Transverse colon (tissue), 4 donors: ENCODE measurements at regions of chr17 and their contacts with region 1.

Region 1: GRCh38 chr17:42760652-42761581 is at the start of gene RAMP2:
- DNase-seq: no peak
- H3K4me3 ChIP-seq: peak within 1 kb of the TSS; percentile 32 to 62 (median 46)
- H3K27ac ChIP-seq: peak within 1 kb of the TSS; percentile 21 to 55 (median 44)
- H3K4me1 ChIP-seq: peaks cover 8 to 22% (median 14%) of the 10 kb centered on the region in 4 donors
- H3K27me3 ChIP-seq: peaks cover 30% of the 10 kb centered on the region
- CTCF ChIP-seq: no peak
- EP300 ChIP-seq: no peak
- POLR2A ChIP-seq: no peak
- total RNA-seq, gene RAMP2: 6.1 to 88.0 (median 23.4) TPM

Region 2: DNA sequence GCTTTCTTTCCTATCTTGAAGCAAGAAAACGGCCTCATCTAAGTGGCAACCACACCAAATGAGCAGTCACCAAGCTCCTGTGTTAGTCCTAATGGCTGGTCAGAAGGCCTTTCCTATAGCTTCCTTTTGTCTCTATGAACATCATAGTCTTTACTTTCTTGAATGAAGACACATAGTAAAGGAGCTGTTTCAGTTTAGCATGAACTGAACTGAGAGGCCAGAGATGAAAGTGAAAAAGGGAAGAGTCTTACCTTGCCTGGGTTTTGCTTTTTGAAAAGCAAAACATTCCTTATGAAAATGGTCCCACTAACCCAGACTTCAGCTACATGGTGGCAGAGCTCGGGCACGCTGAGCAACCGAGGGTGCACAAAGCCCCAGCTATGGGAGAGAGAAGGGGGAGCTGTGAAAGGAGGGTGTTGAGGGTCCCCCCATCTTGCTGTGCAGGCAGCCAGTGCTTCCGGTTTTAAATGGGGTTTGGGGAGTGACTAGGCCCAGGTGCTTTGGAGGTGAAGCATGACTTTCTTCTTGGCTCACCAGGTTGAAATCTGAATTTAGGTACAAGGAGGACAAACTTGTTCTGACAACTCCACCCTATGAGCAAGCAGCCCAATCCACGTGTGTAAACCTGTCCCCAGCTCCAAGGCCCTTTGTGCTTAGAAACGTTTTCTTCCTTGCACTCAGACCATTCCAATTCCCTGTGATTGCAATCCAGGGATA is 174.2 kb before region 1 on chr17:
- in situ Hi-C with region 1: no loop called
- intact Hi-C with region 1: loop called (anchors 10 kb)
- DNase-seq: no peak
- H3K4me3 ChIP-seq: no peak overlapping the region
- H3K27ac ChIP-seq: no peak overlapping the region
- H3K4me1 ChIP-seq: peaks cover 0 to 6% (median 0%) of the 10 kb centered on the region in 4 donors
- H3K27me3 ChIP-seq: no peaks in the 10 kb centered on the region
- CTCF ChIP-seq: no peak
- EP300 ChIP-seq: no peak
- POLR2A ChIP-seq: no peak

Region 3: DNA sequence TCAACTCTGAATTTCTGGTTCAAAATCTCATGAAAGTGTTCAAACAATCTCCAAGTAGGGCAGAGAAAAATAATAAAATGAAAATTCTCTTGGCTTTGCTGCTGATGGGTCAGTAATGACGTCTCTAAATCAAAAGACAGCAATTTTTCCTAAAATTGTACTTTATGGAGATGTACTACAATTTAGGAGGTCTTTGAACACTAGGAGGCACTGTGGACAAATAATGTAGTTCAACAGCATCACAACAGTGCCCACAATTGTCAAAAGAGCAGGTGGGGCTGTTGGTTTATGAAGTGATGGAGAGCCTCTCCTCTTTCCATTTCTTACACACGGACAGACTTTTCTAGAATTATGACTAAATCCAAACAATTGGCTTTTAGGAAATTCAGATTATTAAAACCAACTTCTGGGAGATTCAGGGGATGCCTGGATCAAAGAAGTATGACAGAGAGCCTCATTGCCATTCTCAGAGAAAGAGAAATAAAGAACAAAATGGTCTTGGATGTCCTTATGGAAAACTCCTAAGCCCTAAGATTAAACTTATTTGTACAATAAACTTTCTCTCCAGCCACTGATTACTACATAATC is 39.8 kb before region 1 on chr17:
- in situ Hi-C with region 1: no loop called
- intact Hi-C with region 1: loop called (anchors 5 kb)
- DNase-seq: no peak
- H3K4me3 ChIP-seq: no peak overlapping the region
- H3K27ac ChIP-seq: no peak overlapping the region
- H3K4me1 ChIP-seq: no peaks in the 10 kb centered on the region
- H3K27me3 ChIP-seq: no peaks in the 10 kb centered on the region
- CTCF ChIP-seq: peak; percentile 57 to 71 (median 67)
- EP300 ChIP-seq: no peak
- POLR2A ChIP-seq: no peak

Region 4: DNA sequence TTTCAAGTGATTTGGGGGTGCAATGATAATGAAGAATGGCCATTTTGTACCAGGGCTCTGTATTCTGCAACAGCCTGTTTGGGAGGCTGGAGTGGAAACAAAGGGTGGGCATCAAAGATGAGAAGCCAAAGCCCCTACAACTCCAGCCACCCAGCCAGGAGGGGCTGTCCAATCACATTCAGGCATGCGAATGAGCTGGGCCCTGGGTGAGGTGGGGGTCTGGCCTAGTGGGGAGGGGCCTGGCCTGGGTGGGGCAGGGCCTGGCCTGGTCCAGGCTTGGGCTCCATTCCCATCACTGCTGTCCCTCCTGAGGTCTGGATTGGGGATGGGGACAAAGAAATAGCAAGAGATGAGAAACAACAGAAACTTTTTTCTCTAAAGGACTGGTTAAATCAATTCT is 96.5 kb after region 1 on chr17:
- in situ Hi-C with region 1: no loop called
- intact Hi-C with region 1: no loop called
- DNase-seq: no peak
- H3K4me3 ChIP-seq: no peak overlapping the region
- H3K27ac ChIP-seq: no peak overlapping the region
- H3K4me1 ChIP-seq: peaks cover 0 to 7% (median 3%) of the 10 kb centered on the region in 4 donors
- H3K27me3 ChIP-seq: no peaks in the 10 kb centered on the region
- CTCF ChIP-seq: no peak
- EP300 ChIP-seq: no peak
- POLR2A ChIP-seq: no peak